Heart right ventricle (tissue), 16 donors: ENCODE measurements at regions of chr18 and their contacts with region 1.

Region 1: GRCh38 chr18:25019086-25019860 is 332.7 kb downstream of the ZNF521 start:
- DNase-seq: no peak
- ATAC-seq: no peak
- H3K4me3 ChIP-seq: no peak overlapping the region
- H3K27ac ChIP-seq: no peak overlapping the region
- H3K4me1 ChIP-seq: peaks cover 0 to 4% (median 0%) of the 10 kb centered on the region in 9 donors
- H3K27me3 ChIP-seq: no peaks in the 10 kb centered on the region
- CTCF ChIP-seq: no peak

Region 2: DNA sequence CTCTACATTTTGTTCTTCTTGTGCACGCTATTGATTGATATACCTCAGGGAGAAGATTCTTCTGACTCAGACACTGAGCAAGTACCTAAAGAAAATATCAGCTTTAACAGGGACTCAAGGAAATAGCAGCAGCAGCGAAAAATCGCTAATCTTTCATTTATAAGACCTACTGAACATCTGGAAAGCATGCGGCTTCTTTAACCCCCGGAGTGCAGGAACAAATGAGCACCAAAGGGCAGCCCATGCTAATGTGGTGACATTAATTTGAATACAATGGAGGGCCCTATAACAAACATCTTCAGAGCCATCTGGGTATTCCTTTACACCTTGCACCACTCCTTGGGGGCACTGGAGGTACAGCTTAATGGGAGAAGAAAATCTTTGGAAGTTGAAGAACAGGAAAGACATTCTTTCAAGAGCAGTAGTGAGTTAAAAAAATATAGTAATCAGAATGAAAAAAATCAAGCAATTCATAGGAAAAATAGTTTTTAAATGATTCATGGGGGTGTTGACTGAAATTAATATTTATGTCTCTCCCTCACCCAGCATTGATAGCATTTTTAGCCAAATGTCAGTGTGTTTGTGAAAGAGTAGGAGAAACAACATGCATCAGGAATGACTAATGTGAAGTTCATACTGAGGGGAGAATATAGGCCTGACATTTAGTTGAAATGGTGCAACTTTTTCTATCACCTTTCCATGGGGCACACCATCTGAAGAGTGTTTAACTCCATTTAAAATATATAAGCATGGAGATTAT is 277.1 kb before region 1 on chr18:
- intact Hi-C with region 1: no loop called
- DNase-seq: no peak
- ATAC-seq: no peak
- H3K4me3 ChIP-seq: no peak overlapping the region
- H3K27ac ChIP-seq: no peak overlapping the region
- H3K4me1 ChIP-seq: no peaks in the 10 kb centered on the region
- H3K27me3 ChIP-seq: peaks cover 0 to 3% (median 0%) of the 10 kb centered on the region in 7 donors
- CTCF ChIP-seq: no peak

Region 3: GRCh38 chr18:24885276-24885675 is 134.0 kb before region 1 on chr18:
- intact Hi-C with region 1: loop called in 1 of 10 experiments (anchors 10 kb)
- DNase-seq: no peak
- ATAC-seq: no peak
- H3K4me3 ChIP-seq: no peak overlapping the region
- H3K27ac ChIP-seq: no peak overlapping the region
- H3K4me1 ChIP-seq: no peaks in the 10 kb centered on the region
- H3K27me3 ChIP-seq: no peaks in the 10 kb centered on the region
- CTCF ChIP-seq: no peak

Region 4: DNA sequence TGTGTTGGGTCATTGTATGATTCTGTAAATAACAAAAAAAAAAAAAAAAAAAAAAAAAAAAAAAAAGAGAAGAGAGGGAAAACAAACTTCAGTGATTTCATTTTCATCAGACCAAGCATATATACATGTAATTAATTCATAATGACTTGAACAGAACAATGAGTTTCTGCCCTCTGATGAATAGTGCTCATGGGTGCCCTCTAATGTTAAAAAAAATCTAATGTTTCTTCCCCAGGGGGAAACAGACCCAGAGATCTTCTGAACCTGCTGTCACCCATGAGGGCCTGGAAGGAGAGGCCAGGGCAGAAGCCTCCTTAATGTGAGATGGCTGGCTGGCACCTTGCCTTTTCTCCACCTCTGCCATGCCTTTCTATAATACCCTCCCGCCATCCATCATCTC is 43.4 kb after region 1 on chr18:
- intact Hi-C with region 1: loop called in 1 of 10 experiments (anchors 10 kb)
- DNase-seq: no peak
- ATAC-seq: no peak
- H3K4me3 ChIP-seq: no peak overlapping the region
- H3K27ac ChIP-seq: no peak overlapping the region
- H3K4me1 ChIP-seq: peaks cover 0 to 4% (median 0%) of the 10 kb centered on the region in 9 donors
- H3K27me3 ChIP-seq: no peaks in the 10 kb centered on the region
- CTCF ChIP-seq: peak in 1 of 9 donors; percentile 5